ENCODE measurements at regions of chr12 and their contacts with region 1.

Region 1: DNA sequence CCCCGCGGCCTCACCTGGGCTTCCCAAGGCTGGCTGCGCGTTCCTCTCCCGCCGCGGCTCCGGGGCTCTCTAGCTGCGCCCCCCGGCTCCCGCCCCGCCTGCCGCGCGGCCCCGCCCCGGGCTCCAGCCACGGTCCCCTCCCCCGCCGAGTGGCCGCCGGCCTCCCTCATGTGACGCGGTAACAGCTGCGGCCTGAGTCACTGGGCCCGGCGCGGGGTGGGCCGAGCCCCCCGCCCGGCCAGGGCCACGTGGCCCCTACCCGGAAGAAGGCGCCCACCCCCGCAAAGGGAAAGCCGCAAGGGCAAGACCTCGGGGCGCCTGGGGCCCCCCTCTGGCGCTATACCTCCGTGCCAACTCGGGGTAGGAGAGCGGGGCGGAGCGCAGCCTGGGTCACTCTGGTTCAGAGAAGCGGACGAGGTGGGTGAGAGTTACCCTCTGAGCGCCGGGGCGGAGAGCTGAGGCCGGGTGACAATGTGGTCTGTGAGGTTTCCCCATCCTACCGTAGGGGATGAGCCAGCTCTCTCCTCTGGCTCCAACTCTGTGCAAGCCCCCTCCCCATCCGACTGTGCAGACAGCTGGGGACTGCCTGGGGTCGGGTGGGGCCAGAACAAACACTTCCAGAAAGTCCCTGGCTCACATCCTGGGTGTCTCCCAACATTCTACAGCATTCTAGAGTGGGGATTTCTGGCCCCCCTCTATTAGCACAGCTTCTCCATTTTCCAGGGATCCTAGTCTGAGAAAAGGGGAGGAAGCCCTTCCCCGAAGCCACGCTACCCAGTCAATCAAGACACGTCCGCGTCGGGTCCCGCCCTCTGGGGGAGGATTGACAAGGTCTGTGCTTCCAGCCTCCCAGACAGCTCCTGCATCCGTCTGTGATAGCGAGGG is at the start of gene CD63:
- DNase-seq: peak; percentile 87
- ATAC-seq: peak; percentile 69
- H3K4me3 Mint-ChIP-seq: peak within 1 kb of the TSS; percentile 78
- H3K27ac Mint-ChIP-seq: peak within 1 kb of the TSS; percentile 92
- H3K4me1 Mint-ChIP-seq: peaks cover 57% of the 10 kb centered on the region
- H3K27me3 Mint-ChIP-seq: no peaks in the 10 kb centered on the region
- total RNA-seq, gene CD63: 222 to 288 TPM

Region 2: GRCh38 chr12:55666538-55666937 is 62.6 kb before region 1 on chr12:
- CTCF ChIA-PET with region 1: no interaction called
- DNase-seq: no peak
- ATAC-seq: no peak
- H3K4me3 Mint-ChIP-seq: no peak overlapping the region
- H3K27ac Mint-ChIP-seq: no peak overlapping the region
- H3K4me1 Mint-ChIP-seq: peaks cover 5% of the 10 kb centered on the region
- H3K27me3 Mint-ChIP-seq: peaks cover 12% of the 10 kb centered on the region

Region 3: GRCh38 chr12:55715833-55716581 is 13.2 kb before region 1 on chr12 and contains the start of gene BLOC1S1:
- CTCF ChIA-PET with region 1: interaction called, 233 read pairs
- DNase-seq: peak; percentile 96
- ATAC-seq: peak; percentile 95
- H3K4me3 Mint-ChIP-seq: peak within 1 kb of the TSS; percentile 90
- H3K27ac Mint-ChIP-seq: peak within 1 kb of the TSS; percentile 90
- H3K4me1 Mint-ChIP-seq: peaks cover 49% of the 10 kb centered on the region
- H3K27me3 Mint-ChIP-seq: peaks cover 7% of the 10 kb centered on the region
- total RNA-seq, gene BLOC1S1: 151 to 152 TPM